ENCODE measurements at regions of chr1 and their contacts with region 1.

Region 1: GRCh38 chr1:234978397-234979295 is 150.0 kb downstream of the TOMM20 start:
- DNase-seq: peak; percentile 96
- ATAC-seq: peak; percentile 12
- H3K4me3 ChIP-seq: no peak overlapping the region
- H3K27ac ChIP-seq: peak overlapping the region; percentile 100
- H3K4me1 ChIP-seq: peaks cover 99% of the 10 kb centered on the region
- H3K27me3 ChIP-seq: no peaks in the 10 kb centered on the region; a peak in 1 of 5 replicates
- CTCF ChIP-seq: peak; percentile 62
- EP300 ChIP-seq: peak; percentile 78 to 96; a peak in 3 of 4 replicates
- POLR2A ChIP-seq: peak in 1 of 2 experiments; percentile 24; a peak in 1 of 4 replicates
- RAD21 ChIP-seq: peak; percentile 56; the same call in 1 of the 2 replicates

Region 2: GRCh38 chr1:234544087-234544579 is 434.5 kb before region 1 on chr1:
- CTCF ChIA-PET with region 1: no interaction called
- POLR2A ChIA-PET with region 1: interaction called, 10 read pairs
- in situ Hi-C with region 1: no loop called
- intact Hi-C with region 1: no loop called
- DNase-seq: peak; percentile 78
- ATAC-seq: peak; percentile 24
- H3K4me3 ChIP-seq: peak overlapping the region in 1 of 3 experiments; percentile 67; a peak in 1 of 6 replicates
- H3K27ac ChIP-seq: peak overlapping the region; percentile 18
- H3K4me1 ChIP-seq: peaks cover 58% of the 10 kb centered on the region
- H3K27me3 ChIP-seq: peaks cover 2 to 6% of the 10 kb centered on the region in 2 experiments; a peak in 3 of 5 replicates
- CTCF ChIP-seq: no peak
- EP300 ChIP-seq: no peak
- POLR2A ChIP-seq: no peak
- RAD21 ChIP-seq: no peak

Region 3: DNA sequence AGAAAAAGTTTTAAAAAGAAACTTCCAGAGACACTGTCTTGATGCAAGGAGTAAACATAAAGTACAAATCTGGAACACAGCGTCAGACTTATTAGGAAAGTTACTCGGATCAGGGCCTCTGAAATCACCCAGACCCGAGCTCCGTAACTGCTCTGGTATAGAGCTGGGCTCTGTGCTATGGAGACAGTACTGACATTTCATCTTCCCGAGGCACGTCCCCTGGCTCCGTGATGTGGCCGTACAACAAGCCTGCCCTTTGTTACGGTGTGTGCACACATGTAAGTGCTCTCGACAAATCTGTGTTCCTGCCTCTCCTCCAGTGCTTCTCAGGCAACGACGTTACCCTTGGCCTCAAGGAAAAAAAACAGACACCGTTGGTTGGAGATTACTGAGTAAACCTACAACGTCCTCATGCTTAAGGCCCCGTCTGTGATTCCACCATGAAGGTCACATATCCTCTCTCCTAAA is 261.7 kb before region 1 on chr1:
- CTCF ChIA-PET with region 1: no interaction called
- POLR2A ChIA-PET with region 1: interaction called, 134 read pairs
- in situ Hi-C with region 1: loop called (anchors 5 kb)
- intact Hi-C with region 1: loop called (anchors 5 kb)
- DNase-seq: peak; percentile 81
- ATAC-seq: peak; percentile 62
- H3K4me3 ChIP-seq: peak overlapping the region; percentile 52 to 75 (median 62)
- H3K27ac ChIP-seq: peak overlapping the region; percentile 99
- H3K4me1 ChIP-seq: peaks cover 98% of the 10 kb centered on the region
- H3K27me3 ChIP-seq: no peaks in the 10 kb centered on the region; a peak in 1 of 5 replicates
- CTCF ChIP-seq: no peak
- EP300 ChIP-seq: no peak
- POLR2A ChIP-seq: peak; percentile 64 to 68; a peak in 3 of 4 replicates
- RAD21 ChIP-seq: no peak

Region 4: DNA sequence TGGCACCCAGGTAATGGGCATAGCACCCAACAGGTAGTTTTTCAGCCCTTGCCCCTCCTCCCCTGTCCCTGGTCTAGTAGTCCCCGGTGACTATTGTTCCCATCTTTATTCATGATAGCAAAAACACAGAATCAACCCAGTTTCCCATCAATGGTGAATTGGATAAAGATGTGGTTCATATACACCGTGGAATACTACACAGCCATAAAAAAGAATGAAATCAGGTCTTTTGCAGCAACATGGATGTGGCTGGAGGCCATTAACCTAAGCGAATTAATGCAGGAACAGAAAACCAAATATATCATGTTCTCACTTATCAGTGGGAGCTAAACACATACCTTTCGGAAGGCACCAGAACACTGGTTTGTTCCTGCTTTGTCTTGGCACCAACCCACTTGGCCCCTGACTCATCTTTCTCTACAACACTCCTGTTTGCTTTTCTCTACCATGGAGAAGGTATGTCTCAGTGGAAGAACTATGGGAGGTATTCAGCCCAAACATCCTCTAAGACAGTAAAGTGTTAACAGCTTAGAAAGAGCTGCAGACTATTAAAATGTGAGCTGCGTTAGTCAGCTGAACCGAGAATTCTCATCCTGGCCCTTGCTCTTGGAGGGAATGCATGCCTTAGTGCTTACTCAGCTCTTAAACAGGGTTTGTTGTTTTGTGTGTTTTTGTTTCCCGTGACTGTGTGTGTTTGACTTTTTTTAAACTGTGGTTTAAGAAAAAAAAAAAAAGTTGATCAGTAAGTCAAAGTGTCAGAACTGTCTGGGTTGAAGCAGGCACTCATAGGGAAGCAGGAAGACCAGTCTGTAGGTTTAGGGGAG is 53.0 kb before region 1 on chr1:
- CTCF ChIA-PET with region 1: no interaction called
- POLR2A ChIA-PET with region 1: interaction called, 13 read pairs
- in situ Hi-C with region 1: no loop called
- intact Hi-C with region 1: no loop called
- DNase-seq: peak; percentile 80
- ATAC-seq: peak; percentile 64
- H3K4me3 ChIP-seq: no peak overlapping the region
- H3K27ac ChIP-seq: no peak overlapping the region
- H3K4me1 ChIP-seq: peaks cover 48% of the 10 kb centered on the region
- H3K27me3 ChIP-seq: no peaks in the 10 kb centered on the region
- CTCF ChIP-seq: no peak
- EP300 ChIP-seq: peak in 1 of 2 experiments; percentile 44; a peak in 1 of 4 replicates
- POLR2A ChIP-seq: no peak
- RAD21 ChIP-seq: no peak

Region 5: DNA sequence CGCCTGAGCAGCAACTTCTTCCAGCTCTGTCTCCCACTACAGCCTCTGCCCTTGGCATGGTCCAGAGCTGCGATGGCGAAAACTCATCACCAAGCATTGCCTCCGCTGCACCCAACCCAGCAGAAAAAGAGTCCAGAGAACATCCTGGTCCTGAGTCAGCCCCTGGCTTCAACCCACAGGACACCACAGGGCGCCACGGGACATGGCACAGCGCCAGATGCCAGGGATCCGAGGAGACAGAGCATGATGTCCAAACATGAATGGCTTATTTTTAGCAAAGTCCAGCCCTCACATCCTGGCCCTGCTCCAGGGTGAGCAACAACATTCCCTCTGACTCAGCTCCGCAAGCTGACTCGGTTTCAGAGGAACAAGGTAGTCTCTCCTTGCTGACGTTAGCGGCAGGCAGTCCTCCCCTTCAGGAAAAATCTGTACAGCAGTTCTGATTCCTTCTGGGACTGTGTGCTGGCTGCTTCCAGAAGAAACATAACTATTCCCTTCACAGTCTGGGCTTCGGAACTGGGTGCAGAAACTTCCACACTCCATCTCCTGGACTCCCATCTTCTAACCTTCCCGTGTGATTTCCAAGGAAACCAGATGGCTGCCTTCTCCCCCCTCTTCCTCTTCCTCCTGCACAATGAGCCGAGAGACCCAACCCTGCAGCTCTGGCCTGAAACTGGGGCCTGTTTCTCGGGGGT is 18.7 kb after region 1 on chr1:
- CTCF ChIA-PET with region 1: no interaction called
- POLR2A ChIA-PET with region 1: interaction called, 21 read pairs
- in situ Hi-C with region 1: no loop called
- intact Hi-C with region 1: no loop called
- DNase-seq: peak; percentile 94
- ATAC-seq: peak; percentile 89
- H3K4me3 ChIP-seq: peak overlapping the region; percentile 44 to 69 (median 50)
- H3K27ac ChIP-seq: peak overlapping the region; percentile 62
- H3K4me1 ChIP-seq: peaks cover 50% of the 10 kb centered on the region
- H3K27me3 ChIP-seq: no peaks in the 10 kb centered on the region
- CTCF ChIP-seq: no peak; the same call in 1 of the 2 replicates
- EP300 ChIP-seq: peak in 1 of 2 experiments; percentile 61; a peak in 2 of 4 replicates
- POLR2A ChIP-seq: peak; percentile 56 to 61; a peak in 3 of 4 replicates
- RAD21 ChIP-seq: no peak

Region 6: DNA sequence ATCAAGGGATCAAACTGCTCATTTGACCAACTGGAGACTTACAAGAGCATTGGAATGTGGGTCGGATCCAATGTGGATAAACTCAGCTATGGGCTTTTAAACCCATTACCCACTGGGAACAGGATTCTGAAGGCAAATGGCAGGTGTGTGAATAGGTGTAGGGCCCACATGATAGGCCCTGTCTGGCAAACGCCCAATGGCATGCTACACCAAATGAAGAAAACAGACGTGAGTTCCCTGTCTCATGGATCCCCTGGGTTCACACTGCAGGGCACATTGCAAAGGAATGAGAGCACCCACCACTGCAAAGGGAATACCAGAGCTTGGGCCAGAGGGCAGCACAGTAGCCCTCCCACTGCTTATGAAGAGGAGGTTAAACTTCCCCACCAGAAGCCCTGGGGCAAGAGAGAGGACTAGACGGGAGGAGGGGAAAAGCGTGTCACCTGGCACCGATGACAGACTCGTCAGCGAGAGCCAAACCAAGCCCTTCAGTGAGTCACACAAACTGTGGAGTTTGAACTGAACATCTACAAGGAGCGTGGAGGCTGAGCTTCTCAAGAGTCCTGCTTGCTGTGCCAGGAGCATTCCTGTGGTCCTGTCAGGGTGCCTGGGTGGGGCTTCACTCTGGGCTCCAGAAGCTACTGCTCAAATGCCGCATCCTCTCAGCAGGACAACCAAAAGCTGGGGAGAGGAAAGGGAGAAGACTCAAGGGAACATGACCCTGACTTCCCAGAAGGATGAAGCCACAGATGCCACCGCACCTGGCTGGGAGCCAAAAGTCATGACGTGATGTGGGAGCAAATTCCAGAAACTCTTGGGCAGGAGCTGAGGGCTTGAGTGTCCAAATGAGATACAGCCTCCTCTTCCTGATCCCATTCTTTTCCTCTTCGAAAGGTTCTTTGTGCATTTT is 88.9 kb after region 1 on chr1:
- CTCF ChIA-PET with region 1: no interaction called
- POLR2A ChIA-PET with region 1: interaction called, 309 read pairs
- in situ Hi-C with region 1: no loop called
- intact Hi-C with region 1: no loop called
- DNase-seq: peak; percentile 58
- ATAC-seq: peak; percentile 4; the same call in 2 of the 3 replicates
- H3K4me3 ChIP-seq: peak overlapping the region; percentile 41 to 76 (median 60); a peak in 5 of 6 replicates
- H3K27ac ChIP-seq: peak overlapping the region; percentile 86
- H3K4me1 ChIP-seq: peaks cover 97% of the 10 kb centered on the region
- H3K27me3 ChIP-seq: no peaks in the 10 kb centered on the region
- CTCF ChIP-seq: no peak
- EP300 ChIP-seq: no peak
- POLR2A ChIP-seq: peak in 1 of 2 experiments; percentile 21; a peak in 2 of 4 replicates
- RAD21 ChIP-seq: no peak

Region 7: DNA sequence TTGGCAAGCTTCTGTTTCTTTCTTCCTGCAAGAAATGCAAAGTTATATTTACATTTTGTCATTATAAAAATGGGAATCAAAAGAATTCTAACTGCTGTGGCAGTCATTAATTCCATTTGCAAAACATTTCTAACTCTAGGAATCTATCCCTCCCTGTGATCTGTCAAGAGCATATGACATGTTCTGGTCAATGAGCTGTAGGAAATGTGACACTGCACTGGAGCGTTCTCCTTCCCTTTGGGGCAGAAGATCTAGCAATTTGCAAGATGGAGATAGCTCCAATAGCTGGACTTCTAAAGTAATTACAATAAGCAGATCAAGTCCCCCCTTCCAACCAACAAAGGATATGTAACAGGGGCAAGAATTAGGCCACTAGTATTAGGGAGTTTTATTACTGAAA is 143.7 kb after region 1 on chr1:
- CTCF ChIA-PET with region 1: no interaction called
- POLR2A ChIA-PET with region 1: no interaction called
- in situ Hi-C with region 1: no loop called
- intact Hi-C with region 1: no loop called
- DNase-seq: no peak
- ATAC-seq: no peak
- H3K4me3 ChIP-seq: peak overlapping the region in 1 of 3 experiments; percentile 51; a peak in 1 of 6 replicates
- H3K27ac ChIP-seq: no peak overlapping the region
- H3K4me1 ChIP-seq: peaks cover 59% of the 10 kb centered on the region
- H3K27me3 ChIP-seq: no peaks in the 10 kb centered on the region; a peak in 1 of 5 replicates
- CTCF ChIP-seq: no peak
- EP300 ChIP-seq: no peak
- POLR2A ChIP-seq: no peak
- RAD21 ChIP-seq: no peak